ENCODE measurements at regions of chr11 and their contacts with region 1.

Region 1: DNA sequence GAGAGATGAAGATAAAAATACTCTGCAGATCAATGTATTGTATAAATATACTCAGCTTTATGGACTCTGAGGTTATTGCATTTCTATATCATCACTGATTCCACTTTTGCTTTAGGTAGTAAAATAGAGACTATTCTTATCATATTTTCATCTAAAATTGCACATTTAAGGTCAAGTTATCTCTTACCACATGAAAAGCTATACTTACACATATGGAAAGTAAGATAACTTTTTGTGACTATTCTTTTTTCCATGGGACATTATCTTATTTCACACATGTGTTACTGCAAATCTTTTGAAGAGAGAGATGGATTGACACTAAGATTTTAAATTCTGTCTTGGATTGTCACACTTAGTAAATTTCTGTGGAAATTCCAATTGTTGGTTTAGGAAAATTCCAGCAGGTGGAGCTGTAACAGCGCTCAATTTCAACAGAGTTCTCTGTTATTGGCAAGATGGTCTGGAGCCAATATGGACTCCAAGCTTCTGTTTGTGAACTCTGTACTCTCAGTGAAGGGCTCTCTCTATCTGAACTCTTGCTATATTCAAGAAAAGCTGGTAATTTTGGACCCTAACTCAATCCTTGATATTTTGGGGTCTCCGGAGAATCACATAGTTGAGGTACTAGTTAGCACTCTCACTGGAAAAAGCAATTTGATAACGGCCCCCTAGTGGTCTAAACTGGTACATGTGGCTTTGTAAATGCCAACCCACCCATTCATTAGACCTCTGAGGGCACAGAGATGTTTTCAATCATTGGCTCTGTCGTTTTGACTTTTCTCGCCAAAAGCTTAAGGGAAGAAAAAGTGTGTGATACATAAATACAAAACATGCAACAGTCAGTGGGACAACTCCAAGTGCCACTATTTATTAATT is 429.7 kb downstream of the ETS1 start:
- DNase-seq: peak; percentile 74
- H3K4me3 Mint-ChIP-seq: peak overlapping the region; percentile 64
- H3K27ac Mint-ChIP-seq: peak overlapping the region; percentile 82
- H3K4me1 Mint-ChIP-seq: peaks cover 5% of the 10 kb centered on the region
- H3K27me3 Mint-ChIP-seq: no peaks in the 10 kb centered on the region

Region 2: GRCh38 chr11:128026596-128026995 is 131.1 kb before region 1 on chr11:
- CTCF ChIA-PET with region 1: interaction called, 45 read pairs
- intact Hi-C with region 1: loop called (anchors 1 kb)
- DNase-seq: no peak
- H3K4me3 Mint-ChIP-seq: no peak overlapping the region
- H3K27ac Mint-ChIP-seq: no peak overlapping the region
- H3K4me1 Mint-ChIP-seq: peaks cover 4% of the 10 kb centered on the region
- H3K27me3 Mint-ChIP-seq: no peaks in the 10 kb centered on the region

Region 3: DNA sequence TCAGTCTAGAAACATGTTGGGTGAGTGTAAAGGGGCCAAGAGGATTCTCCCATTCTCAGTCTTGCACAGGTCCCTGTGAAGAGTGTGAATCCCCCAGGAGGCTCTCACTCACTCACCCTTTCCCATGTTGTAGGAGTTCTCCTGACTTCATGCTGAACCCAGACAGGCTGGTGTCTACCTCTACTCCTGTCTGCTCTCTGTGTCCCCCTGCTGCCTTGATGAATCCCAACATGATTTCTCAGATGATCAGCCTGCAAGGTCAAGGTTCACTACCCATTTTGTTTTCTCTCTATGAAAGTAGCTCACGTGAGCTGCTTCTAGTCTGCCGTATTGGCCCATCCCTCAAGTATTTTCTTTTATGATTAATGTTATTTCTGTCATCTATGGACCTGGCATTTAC is 70.9 kb before region 1 on chr11:
- CTCF ChIA-PET with region 1: interaction called, 10 read pairs
- intact Hi-C with region 1: no loop called
- DNase-seq: no peak
- H3K4me3 Mint-ChIP-seq: no peak overlapping the region
- H3K27ac Mint-ChIP-seq: no peak overlapping the region
- H3K4me1 Mint-ChIP-seq: peaks cover 44% of the 10 kb centered on the region
- H3K27me3 Mint-ChIP-seq: no peaks in the 10 kb centered on the region

Region 4: DNA sequence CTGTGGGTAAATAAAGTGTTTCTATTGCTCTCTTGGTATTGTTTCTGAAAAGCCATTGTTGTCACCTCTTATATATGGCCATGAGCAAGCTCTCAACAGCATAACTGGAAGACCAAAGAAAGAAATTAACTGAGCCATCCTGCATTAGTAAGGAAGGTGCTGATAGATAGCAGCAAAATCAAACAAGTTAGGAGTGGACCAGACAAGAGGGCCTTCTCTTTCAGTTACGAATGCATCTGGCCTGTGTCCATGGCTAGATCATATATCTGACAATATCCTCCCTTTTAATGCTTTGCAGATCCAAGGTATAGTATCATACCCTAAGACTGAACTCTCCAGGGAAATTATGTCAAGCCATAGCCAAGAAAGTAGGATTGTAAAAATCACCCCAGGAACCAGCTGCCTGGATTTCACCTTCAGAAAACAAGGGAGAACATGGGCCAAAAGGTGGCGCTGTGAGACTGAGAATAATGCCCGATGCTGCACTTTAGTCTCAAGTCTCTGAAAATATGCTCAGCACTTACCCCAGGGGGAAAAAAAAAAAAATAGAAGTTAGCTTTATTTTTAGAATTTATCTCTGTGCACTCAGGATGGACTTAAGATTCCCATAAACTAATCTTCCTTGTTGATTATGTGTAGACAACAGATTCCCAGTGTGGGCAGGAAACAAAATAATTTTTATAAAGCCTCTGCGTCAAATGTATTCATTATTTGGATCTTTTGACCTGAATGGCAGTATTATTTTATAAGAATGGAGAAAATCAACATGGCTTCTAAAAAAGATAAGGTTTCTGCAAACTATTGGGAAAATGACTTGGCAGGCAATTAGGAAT is 14.6 kb after region 1 on chr11:
- CTCF ChIA-PET with region 1: interaction called, 88 read pairs
- intact Hi-C with region 1: no loop called
- DNase-seq: peak; percentile 96
- H3K4me3 Mint-ChIP-seq: no peak overlapping the region
- H3K27ac Mint-ChIP-seq: no peak overlapping the region
- H3K4me1 Mint-ChIP-seq: peaks cover 7% of the 10 kb centered on the region
- H3K27me3 Mint-ChIP-seq: no peaks in the 10 kb centered on the region

Region 5: GRCh38 chr11:128859563-128860441 is 702.1 kb after region 1 on chr11:
- CTCF ChIA-PET with region 1: interaction called, 9 read pairs
- intact Hi-C with region 1: loop called (anchors 1 kb)
- DNase-seq: peak; percentile 85
- H3K4me3 Mint-ChIP-seq: no peak overlapping the region
- H3K27ac Mint-ChIP-seq: no peak overlapping the region
- H3K4me1 Mint-ChIP-seq: peaks cover 3% of the 10 kb centered on the region
- H3K27me3 Mint-ChIP-seq: no peaks in the 10 kb centered on the region

Measured in activated naive CD4-positive, alpha-beta T cell treated with anti-CD3 and anti-CD28 coated beads for 36 hours (primary cell).